Activated naive CD4-positive, alpha-beta T cell treated with anti-CD3 and anti-CD28 coated beads, Interleukin-2, amount 10 ng/mL, durations not matched to agents 7 days and 5 days (primary cell): ENCODE measurements at regions of chr13 and their contacts with region 1.

Region 1: GRCh38 chr13:91406619-91407018 is 8.2 kb downstream of the GPC5 start:
- DNase-seq: peak; percentile 37
- H3K4me3 Mint-ChIP-seq: no peak overlapping the region
- H3K27ac Mint-ChIP-seq: no peak overlapping the region
- H3K4me1 Mint-ChIP-seq: no peaks in the 10 kb centered on the region
- H3K27me3 Mint-ChIP-seq: peaks cover 17% of the 10 kb centered on the region

Region 2: GRCh38 chr13:91313103-91313502 is 93.5 kb before region 1 on chr13:
- CTCF ChIA-PET with region 1: interaction called, 19 read pairs
- DNase-seq: peak; percentile 30
- H3K4me3 Mint-ChIP-seq: no peak overlapping the region
- H3K27ac Mint-ChIP-seq: no peak overlapping the region
- H3K4me1 Mint-ChIP-seq: peaks cover 23% of the 10 kb centered on the region
- H3K27me3 Mint-ChIP-seq: peaks cover 17% of the 10 kb centered on the region

Region 3: GRCh38 chr13:91375116-91375729 is 31.4 kb before region 1 on chr13:
- CTCF ChIA-PET with region 1: interaction called, 22 read pairs
- DNase-seq: peak; percentile 34
- H3K4me3 Mint-ChIP-seq: no peak overlapping the region
- H3K27ac Mint-ChIP-seq: no peak overlapping the region
- H3K4me1 Mint-ChIP-seq: peaks cover 10% of the 10 kb centered on the region
- H3K27me3 Mint-ChIP-seq: peaks cover 4% of the 10 kb centered on the region

Region 4: GRCh38 chr13:91381371-91381770 is 25.2 kb before region 1 on chr13:
- CTCF ChIA-PET with region 1: interaction called, 22 read pairs
- DNase-seq: no peak
- H3K4me3 Mint-ChIP-seq: no peak overlapping the region
- H3K27ac Mint-ChIP-seq: no peak overlapping the region
- H3K4me1 Mint-ChIP-seq: no peaks in the 10 kb centered on the region
- H3K27me3 Mint-ChIP-seq: peaks cover 6% of the 10 kb centered on the region